ENCODE measurements at regions of chr15 and their contacts with region 1.

Region 1: GRCh38 chr15:101641166-101641764 is 10.9 kb downstream of the TM2D3 start:
- DNase-seq: peak; percentile 73 to 78 (median 77)
- H3K4me3 ChIP-seq: no peak overlapping the region
- H3K4me3 Mint-ChIP-seq: peak overlapping the region in 5 of 8 donors; percentile 4 to 52 (median 18)
- H3K27ac ChIP-seq: peak overlapping the region; percentile 67
- H3K27ac Mint-ChIP-seq: peak overlapping the region; percentile 80 to 95 (median 94)
- H3K4me1 ChIP-seq: peaks cover 25% of the 10 kb centered on the region
- H3K4me1 Mint-ChIP-seq: peaks cover 20 to 30% (median 25%) of the 10 kb centered on the region in 4 donors
- H3K27me3 ChIP-seq: no peaks in the 10 kb centered on the region
- H3K27me3 Mint-ChIP-seq: no peaks in the 10 kb centered on the region

Region 2: GRCh38 chr15:101288908-101289513 is 352.3 kb before region 1 on chr15:
- CTCF ChIA-PET with region 1: interaction called, 50 read pairs
- POLR2A ChIA-PET with region 1: interaction called, 13 read pairs
- intact Hi-C with region 1: no loop called
- DNase-seq: peak in 4 of 5 donors; percentile 62 to 67 (median 63)
- H3K4me3 ChIP-seq: no peak overlapping the region
- H3K4me3 Mint-ChIP-seq: peak overlapping the region in 2 of 8 donors; percentile 57 to 70
- H3K27ac ChIP-seq: no peak overlapping the region
- H3K27ac Mint-ChIP-seq: peak overlapping the region; percentile 36 to 94 (median 79)
- H3K4me1 ChIP-seq: peaks cover 45% of the 10 kb centered on the region
- H3K4me1 Mint-ChIP-seq: peaks cover 31 to 49% (median 41%) of the 10 kb centered on the region in 4 donors
- H3K27me3 ChIP-seq: no peaks in the 10 kb centered on the region
- H3K27me3 Mint-ChIP-seq: no peaks in the 10 kb centered on the region

Region 3: DNA sequence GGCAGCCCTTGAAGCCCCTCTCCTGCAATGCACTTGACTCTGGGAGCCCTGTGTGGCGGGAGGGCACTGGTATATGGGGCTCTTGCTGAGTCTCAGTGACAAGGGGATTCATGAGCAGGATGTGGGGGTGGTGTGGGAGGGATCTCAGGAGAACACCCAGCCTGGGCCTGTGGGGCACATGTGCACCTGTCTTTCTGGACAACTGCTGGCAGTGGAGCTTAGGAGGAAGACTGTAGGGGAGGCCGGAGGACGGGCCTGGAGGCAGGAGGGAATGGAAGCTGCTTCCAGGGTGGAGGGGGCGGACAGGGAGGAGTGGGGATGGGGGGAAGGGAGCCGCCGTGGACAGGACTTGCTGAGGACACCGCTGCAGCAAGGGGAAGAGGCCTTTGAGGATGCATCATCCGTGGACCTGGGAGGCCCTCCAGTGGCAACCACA is 335.4 kb before region 1 on chr15:
- CTCF ChIA-PET with region 1: interaction called, 43 read pairs
- POLR2A ChIA-PET with region 1: no interaction called
- intact Hi-C with region 1: no loop called
- DNase-seq: no peak
- H3K4me3 ChIP-seq: no peak overlapping the region
- H3K4me3 Mint-ChIP-seq: no peak overlapping the region
- H3K27ac ChIP-seq: no peak overlapping the region
- H3K27ac Mint-ChIP-seq: no peak overlapping the region
- H3K4me1 ChIP-seq: no peaks in the 10 kb centered on the region
- H3K4me1 Mint-ChIP-seq: no peaks in the 10 kb centered on the region
- H3K27me3 ChIP-seq: no peaks in the 10 kb centered on the region
- H3K27me3 Mint-ChIP-seq: peaks cover 2 to 5% of the 10 kb centered on the region in 2 donors

Region 4: GRCh38 chr15:101652098-101652782 is 11.0 kb after region 1 on chr15 and contains the start of gene TM2D3:
- CTCF ChIA-PET with region 1: interaction called, 14 read pairs
- POLR2A ChIA-PET with region 1: interaction called, 28 read pairs
- intact Hi-C with region 1: loop called (anchors 1 kb)
- DNase-seq: peak; percentile 94 to 97 (median 96)
- H3K4me3 ChIP-seq: peak within 1 kb of the TSS; percentile 62 to 96
- H3K4me3 Mint-ChIP-seq: peak within 1 kb of the TSS; percentile 92 to 95 (median 95)
- H3K27ac ChIP-seq: peak within 1 kb of the TSS; percentile 97
- H3K27ac Mint-ChIP-seq: peak within 1 kb of the TSS; percentile 95 to 98 (median 97)
- H3K4me1 ChIP-seq: peaks cover 33% of the 10 kb centered on the region
- H3K4me1 Mint-ChIP-seq: peaks cover 19 to 53% (median 29%) of the 10 kb centered on the region in 4 donors
- H3K27me3 ChIP-seq: no peaks in the 10 kb centered on the region
- H3K27me3 Mint-ChIP-seq: no peaks in the 10 kb centered on the region
- total RNA-seq, gene TM2D3: 86.3 to 92.9 TPM

Region 5: GRCh38 chr15:101723874-101724674 is 82.8 kb after region 1 on chr15 and contains the start of gene TARS3:
- CTCF ChIA-PET with region 1: interaction called, 10 read pairs
- POLR2A ChIA-PET with region 1: interaction called, 7 read pairs
- intact Hi-C with region 1: no loop called
- DNase-seq: peak; percentile 90 to 97 (median 90)
- H3K4me3 ChIP-seq: peak within 1 kb of the TSS; percentile 45 to 76
- H3K4me3 Mint-ChIP-seq: peak within 1 kb of the TSS; percentile 83 to 97 (median 92)
- H3K27ac ChIP-seq: peak within 1 kb of the TSS; percentile 75
- H3K27ac Mint-ChIP-seq: peak within 1 kb of the TSS; percentile 87 to 95 (median 91)
- H3K4me1 ChIP-seq: peaks cover 22% of the 10 kb centered on the region
- H3K4me1 Mint-ChIP-seq: peaks cover 17 to 43% (median 30%) of the 10 kb centered on the region in 4 donors
- H3K27me3 ChIP-seq: no peaks in the 10 kb centered on the region
- H3K27me3 Mint-ChIP-seq: no peaks in the 10 kb centered on the region
- total RNA-seq, gene TARS3: 35.8 to 39.8 TPM